Thyroid gland (tissue), 4 donors: ENCODE measurements at regions of chr1 and their contacts with region 1.

Region 1: DNA sequence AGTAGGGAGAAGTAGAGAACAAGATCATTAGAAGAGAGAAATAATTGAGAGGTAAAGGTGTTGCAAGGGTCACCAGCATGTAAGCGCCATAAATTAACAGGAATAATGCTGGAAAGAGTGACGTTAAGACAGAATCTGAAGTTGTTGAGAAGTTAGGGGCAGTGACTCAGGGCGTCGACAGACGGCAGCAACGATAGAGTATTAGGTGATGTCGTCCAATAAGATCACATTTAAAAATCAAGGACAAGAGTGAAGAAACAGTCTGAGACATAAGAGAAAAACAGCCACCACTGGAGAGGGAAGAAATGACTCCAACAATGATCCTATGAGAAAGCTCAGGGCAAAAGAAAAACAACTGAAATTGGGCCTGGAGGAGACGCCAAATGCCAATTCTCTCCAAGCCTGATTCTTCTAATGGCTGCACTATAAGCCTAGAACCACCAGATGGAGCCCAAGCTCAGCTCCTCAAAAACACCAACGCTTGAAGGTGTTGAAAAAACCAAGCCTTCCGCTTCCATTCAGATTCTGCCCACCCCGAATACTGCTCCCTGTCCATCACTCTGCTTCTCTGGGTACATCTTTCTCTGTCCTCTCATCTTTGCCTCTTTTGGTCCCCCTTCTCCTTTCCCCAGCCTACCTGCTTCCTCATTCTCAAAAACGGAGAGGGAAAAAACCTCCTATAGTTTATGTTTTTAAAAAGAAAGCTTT is 70.0 kb downstream of the LUZP1 start:
- DNase-seq: peak; percentile 61 to 67
- H3K4me3 ChIP-seq: no peak overlapping the region
- H3K27ac ChIP-seq: no peak overlapping the region
- H3K4me1 ChIP-seq: peaks cover 8 to 44% of the 10 kb centered on the region in 2 donors
- H3K27me3 ChIP-seq: no peaks in the 10 kb centered on the region
- CTCF ChIP-seq: peak; percentile 75 to 98 (median 92)
- POLR2A ChIP-seq: no peak

Region 2: GRCh38 chr1:23184212-23184934 is 85.8 kb after region 1 on chr1:
- intact Hi-C with region 1: loop called (anchors 2 kb)
- DNase-seq: peak; percentile 7 to 20
- H3K4me3 ChIP-seq: no peak overlapping the region
- H3K27ac ChIP-seq: no peak overlapping the region
- H3K4me1 ChIP-seq: peaks cover 0 to 5% of the 10 kb centered on the region in 2 donors
- H3K27me3 ChIP-seq: no peaks in the 10 kb centered on the region
- CTCF ChIP-seq: peak; percentile 58 to 96 (median 78)
- POLR2A ChIP-seq: no peak

Region 3: GRCh38 chr1:23273450-23274133 is 175.0 kb after region 1 on chr1:
- intact Hi-C with region 1: loop called (anchors 10 kb)
- DNase-seq: peak; percentile 43
- H3K4me3 ChIP-seq: no peak overlapping the region
- H3K27ac ChIP-seq: no peak overlapping the region
- H3K4me1 ChIP-seq: peaks cover 4 to 6% of the 10 kb centered on the region in 2 donors
- H3K27me3 ChIP-seq: no peaks in the 10 kb centered on the region
- CTCF ChIP-seq: no peak
- POLR2A ChIP-seq: no peak